Mammary epithelial cell (primary cell): ENCODE measurements at regions of chr6 and their contacts with region 1.

Region 1: GRCh38 chr6:17156112-17156921 is 54.5 kb downstream of the STMND1 start:
- DNase-seq: peak; percentile 49
- H3K4me3 ChIP-seq: no peak overlapping the region
- H3K27ac ChIP-seq: no peak overlapping the region
- H3K4me1 ChIP-seq: no peaks in the 10 kb centered on the region
- H3K27me3 ChIP-seq: no peaks in the 10 kb centered on the region
- CTCF ChIP-seq: peak; percentile 73 to 77

Region 2: DNA sequence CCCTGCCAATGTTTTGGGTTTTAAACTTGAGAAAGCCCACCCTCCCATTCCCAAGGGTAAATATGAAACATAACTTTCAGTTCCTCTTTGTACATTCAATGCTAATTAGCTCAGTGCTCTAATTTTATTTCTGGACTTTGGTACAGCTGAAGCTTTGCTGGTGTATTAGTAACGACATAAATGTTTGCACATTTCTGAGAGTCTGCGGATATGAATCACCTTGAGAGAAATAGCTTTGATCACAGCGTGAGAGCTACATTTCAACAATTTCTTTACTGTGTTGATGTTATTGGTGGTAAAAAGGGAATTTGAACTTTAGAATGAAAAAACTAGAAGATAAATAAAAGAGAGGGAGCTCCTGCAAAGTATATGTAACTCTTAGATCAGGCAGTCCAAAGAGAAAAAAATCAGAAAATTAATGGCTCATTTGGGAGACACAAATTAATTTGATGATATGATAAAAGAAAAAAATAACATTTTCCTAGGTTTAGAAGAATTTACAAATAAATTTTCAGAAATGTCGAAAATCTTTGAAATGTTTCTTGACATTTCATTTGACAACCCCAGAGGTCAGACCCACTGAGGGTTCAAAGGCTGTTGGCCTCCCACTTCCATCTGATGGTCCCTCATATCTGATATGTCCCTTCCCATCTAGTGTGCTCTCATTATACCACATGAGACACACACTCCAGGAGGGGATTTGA is 198.5 kb after region 1 on chr6:
- CTCF ChIA-PET with region 1: no interaction called
- dilution Hi-C with region 1: no loop called
- in situ Hi-C with region 1: no loop called
- intact Hi-C with region 1: no loop called
- DNase-seq: no peak
- H3K4me3 ChIP-seq: no peak overlapping the region
- H3K27ac ChIP-seq: no peak overlapping the region
- H3K4me1 ChIP-seq: no peaks in the 10 kb centered on the region
- H3K27me3 ChIP-seq: no peaks in the 10 kb centered on the region
- CTCF ChIP-seq: no peak

Region 3: GRCh38 chr6:17584241-17584803 is 428.0 kb after region 1 on chr6:
- CTCF ChIA-PET with region 1: no interaction called
- dilution Hi-C with region 1: loop called (anchors 25 kb)
- in situ Hi-C with region 1: loop called (anchors 5 kb)
- intact Hi-C with region 1: loop called (anchors 1 kb)
- DNase-seq: peak; percentile 58
- H3K4me3 ChIP-seq: no peak overlapping the region
- H3K27ac ChIP-seq: no peak overlapping the region
- H3K4me1 ChIP-seq: peaks cover 6% of the 10 kb centered on the region
- H3K27me3 ChIP-seq: no peaks in the 10 kb centered on the region
- CTCF ChIP-seq: peak; percentile 64 to 67

Region 4: DNA sequence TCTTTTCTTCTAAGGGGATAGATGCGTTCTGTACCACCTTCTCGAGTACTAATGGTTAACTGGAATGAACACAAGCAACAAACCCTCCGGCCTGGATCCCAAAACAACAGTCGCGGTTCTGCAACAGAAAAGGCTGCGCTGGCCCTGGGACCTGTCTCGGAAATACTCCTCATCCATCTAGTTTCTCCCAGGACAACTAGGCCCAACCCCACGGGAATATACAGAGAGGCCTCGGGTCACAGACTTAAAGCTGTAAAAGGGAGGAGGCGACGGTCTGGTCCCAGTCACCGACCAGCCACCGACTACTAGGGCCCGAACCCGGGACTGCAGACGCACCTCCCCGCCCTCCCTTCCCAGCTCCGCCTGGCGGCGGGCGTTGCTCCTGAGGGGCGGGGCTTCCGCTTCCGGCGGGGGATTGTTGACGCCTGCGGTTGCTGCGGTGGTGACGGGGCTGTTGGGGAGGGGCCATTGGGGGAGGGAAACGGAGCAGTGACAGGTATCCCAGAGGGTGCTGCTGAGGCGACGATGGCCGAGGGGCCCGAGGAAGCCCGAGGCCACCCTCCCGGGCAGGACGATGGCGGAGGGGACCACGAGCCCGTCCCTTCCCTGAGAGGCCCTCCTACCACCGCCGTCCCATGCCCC is 443.7 kb after region 1 on chr6 and contains the start of gene FAM8A1:
- CTCF ChIA-PET with region 1: no interaction called
- dilution Hi-C with region 1: loop called (anchors 25 kb)
- in situ Hi-C with region 1: no loop called
- intact Hi-C with region 1: no loop called
- DNase-seq: peak; percentile 85
- H3K4me3 ChIP-seq: peak within 1 kb of the TSS; percentile 85 to 95 (median 85)
- H3K27ac ChIP-seq: peak within 1 kb of the TSS; percentile 55
- H3K4me1 ChIP-seq: peaks cover 3% of the 10 kb centered on the region
- H3K27me3 ChIP-seq: no peaks in the 10 kb centered on the region
- CTCF ChIP-seq: peak in 1 of 2 donors; percentile 65
- total RNA-seq, gene FAM8A1: 8.9 to 16.2 TPM

Region 5: DNA sequence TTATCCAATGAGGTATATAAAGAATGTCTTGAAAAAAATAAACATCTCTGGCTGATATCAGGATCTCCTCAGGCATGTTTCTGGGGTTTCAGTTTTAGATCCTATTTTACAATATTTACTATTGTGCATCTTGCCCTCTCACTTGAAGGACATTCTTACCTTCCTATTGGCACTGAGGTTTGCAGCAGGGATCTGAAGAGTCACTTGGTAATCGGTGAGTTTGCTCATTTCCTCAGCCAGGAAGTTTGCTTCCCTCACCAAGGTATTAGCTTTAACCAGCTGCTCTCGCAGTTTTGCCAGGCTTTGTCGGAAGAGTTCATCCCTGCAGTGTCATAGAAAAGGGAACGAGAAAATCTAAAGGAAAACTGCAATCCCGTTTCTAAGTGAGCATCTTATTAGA is 652.3 kb after region 1 on chr6:
- CTCF ChIA-PET with region 1: no interaction called
- dilution Hi-C with region 1: no loop called
- in situ Hi-C with region 1: loop called in 1 of 2 experiments (anchors 25 kb)
- intact Hi-C with region 1: loop called (anchors 1 kb)
- DNase-seq: no peak
- H3K4me3 ChIP-seq: no peak overlapping the region
- H3K27ac ChIP-seq: no peak overlapping the region
- H3K4me1 ChIP-seq: no peaks in the 10 kb centered on the region
- H3K27me3 ChIP-seq: no peaks in the 10 kb centered on the region
- CTCF ChIP-seq: no peak